ENCODE measurements at regions of chr3 and their contacts with region 1.

Region 1: DNA sequence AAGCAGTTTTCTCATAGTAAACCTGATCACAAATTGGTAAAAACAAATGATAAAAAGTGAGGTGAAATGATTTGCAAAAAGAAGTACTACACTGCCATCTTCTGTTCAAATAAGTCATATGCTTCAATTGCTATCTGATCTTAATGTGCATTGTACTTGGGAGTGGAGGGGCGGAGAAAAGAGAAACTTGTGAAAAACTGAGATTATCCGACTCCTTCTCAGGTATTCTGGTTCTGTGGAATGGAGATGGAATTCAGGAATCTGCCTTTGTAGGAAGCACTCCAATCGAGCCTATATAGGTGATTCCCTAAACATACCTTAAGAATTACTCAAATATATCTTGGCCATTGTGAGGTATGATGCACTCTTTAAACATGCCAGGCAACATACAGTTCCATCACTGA is 180.6 kb downstream of the CHL1 start:
- DNase-seq: peak in 1 of 2 experiments; percentile 18
- H3K4me3 ChIP-seq: no peak overlapping the region
- H3K4me3 Mint-ChIP-seq: no peak overlapping the region
- H3K27ac Mint-ChIP-seq: no peak overlapping the region
- H3K4me1 ChIP-seq: no peaks in the 10 kb centered on the region
- H3K4me1 Mint-ChIP-seq: no peaks in the 10 kb centered on the region
- H3K27me3 ChIP-seq: no peaks in the 10 kb centered on the region
- H3K27me3 Mint-ChIP-seq: peaks cover 5% of the 10 kb centered on the region
- CTCF ChIP-seq: peak in 1 of 2 experiments; percentile 43

Region 2: DNA sequence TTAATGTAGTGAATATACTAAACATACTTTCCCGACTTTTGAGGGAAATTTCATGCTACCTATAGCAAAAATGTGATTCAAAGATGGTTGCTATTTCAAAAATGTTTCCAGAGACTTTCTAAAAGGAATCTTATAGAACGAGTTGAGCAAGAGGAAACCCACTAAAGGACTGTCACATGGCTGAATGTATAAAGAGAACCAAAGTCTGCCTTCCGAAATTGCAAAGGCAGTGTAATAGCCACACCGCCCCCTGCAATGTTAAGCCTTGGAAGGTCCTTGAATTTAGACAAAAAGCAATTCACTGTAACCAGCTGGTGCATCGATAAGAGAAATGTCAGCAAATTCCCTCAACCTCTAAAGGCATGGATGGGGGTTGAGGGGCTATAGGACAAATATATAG is 37.8 kb before region 1 on chr3:
- CTCF ChIA-PET with region 1: no interaction called
- POLR2A ChIA-PET with region 1: no interaction called
- intact Hi-C with region 1: no loop called
- DNase-seq: no peak
- H3K4me3 ChIP-seq: no peak overlapping the region
- H3K4me3 Mint-ChIP-seq: no peak overlapping the region
- H3K27ac Mint-ChIP-seq: no peak overlapping the region
- H3K4me1 ChIP-seq: no peaks in the 10 kb centered on the region
- H3K4me1 Mint-ChIP-seq: no peaks in the 10 kb centered on the region
- H3K27me3 ChIP-seq: no peaks in the 10 kb centered on the region
- H3K27me3 Mint-ChIP-seq: no peaks in the 10 kb centered on the region
- CTCF ChIP-seq: no peak

Region 3: DNA sequence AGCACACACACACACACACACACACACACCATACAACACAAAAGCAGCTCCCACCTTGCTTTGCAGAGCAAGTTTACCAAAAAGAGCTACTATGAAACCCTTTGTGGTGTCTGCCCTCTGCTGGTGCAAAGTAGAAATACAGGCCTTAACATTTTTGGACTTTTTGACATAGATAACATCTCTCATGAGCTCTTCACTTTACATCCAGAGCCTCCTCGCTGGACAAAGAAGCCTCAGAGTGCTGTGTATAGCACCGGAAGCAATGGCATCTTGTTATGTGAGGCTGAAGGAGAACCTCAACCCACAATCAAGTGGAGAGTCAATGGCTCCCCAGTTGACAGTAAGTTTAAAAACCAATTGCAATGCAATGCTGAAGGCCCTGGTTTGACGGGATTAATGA is 22.7 kb before region 1 on chr3:
- CTCF ChIA-PET with region 1: no interaction called
- POLR2A ChIA-PET with region 1: no interaction called
- intact Hi-C with region 1: loop called (anchors 2 kb)
- DNase-seq: peak; percentile 39 to 63
- H3K4me3 ChIP-seq: no peak overlapping the region
- H3K4me3 Mint-ChIP-seq: no peak overlapping the region
- H3K27ac Mint-ChIP-seq: no peak overlapping the region
- H3K4me1 ChIP-seq: no peaks in the 10 kb centered on the region
- H3K4me1 Mint-ChIP-seq: no peaks in the 10 kb centered on the region
- H3K27me3 ChIP-seq: no peaks in the 10 kb centered on the region
- H3K27me3 Mint-ChIP-seq: peaks cover 7% of the 10 kb centered on the region
- CTCF ChIP-seq: peak; percentile 75 to 76